Right lobe of liver (tissue), 6 donors: ENCODE measurements at regions of chr3 and their contacts with region 1.

Region 1: DNA sequence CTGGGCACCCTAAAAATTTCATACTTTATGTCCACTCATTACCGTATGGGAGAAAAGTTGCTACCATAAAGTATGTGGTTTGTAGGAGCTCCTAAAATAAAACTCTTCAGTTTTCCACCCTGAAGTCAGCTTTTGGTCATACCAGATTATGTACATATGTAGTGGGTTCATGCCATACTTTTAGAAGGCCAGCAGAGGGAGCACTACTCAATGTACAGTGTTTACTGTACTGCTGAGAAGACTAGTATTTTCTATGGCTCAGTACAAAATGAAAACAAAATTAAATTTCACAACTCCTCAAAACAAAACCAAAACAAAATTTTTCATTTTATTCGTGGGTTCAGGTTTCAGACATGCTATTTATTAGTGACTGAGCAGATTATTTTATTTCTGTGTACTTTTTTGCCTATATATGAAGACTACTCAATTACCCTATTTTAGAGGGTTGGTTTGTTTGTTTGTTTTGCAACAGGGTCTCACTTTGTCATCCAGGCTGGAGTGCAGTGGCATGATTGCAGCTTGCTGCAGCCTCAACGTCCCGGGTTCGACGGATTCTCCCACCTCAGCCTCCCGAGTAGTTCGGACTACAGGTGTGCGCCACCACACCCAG is 24.3 kb downstream of the NXPE3 start:
- DNase-seq: no peak
- ATAC-seq: peak; percentile 99 to 100 (median 100)
- H3K4me3 ChIP-seq: no peak overlapping the region
- H3K27ac ChIP-seq: no peak overlapping the region
- H3K4me1 ChIP-seq: no peaks in the 10 kb centered on the region
- H3K27me3 ChIP-seq: no peaks in the 10 kb centered on the region
- CTCF ChIP-seq: peak; percentile 84 to 94 (median 92)
- POLR2A ChIP-seq: no peak

Region 2: GRCh38 chr3:102536456-102536855 is 733.2 kb after region 1 on chr3:
- intact Hi-C with region 1: loop called in 1 of 2 experiments (anchors 10 kb)
- DNase-seq: no peak
- ATAC-seq: peak; percentile 85 to 94 (median 90)
- H3K4me3 ChIP-seq: no peak overlapping the region
- H3K27ac ChIP-seq: no peak overlapping the region
- H3K4me1 ChIP-seq: no peaks in the 10 kb centered on the region
- H3K27me3 ChIP-seq: no peaks in the 10 kb centered on the region
- CTCF ChIP-seq: peak; percentile 45 to 55 (median 50)
- POLR2A ChIP-seq: no peak